Lower leg skin (tissue), 4 donors: ENCODE measurements at regions of chr12 and their contacts with region 1.

Region 1: DNA sequence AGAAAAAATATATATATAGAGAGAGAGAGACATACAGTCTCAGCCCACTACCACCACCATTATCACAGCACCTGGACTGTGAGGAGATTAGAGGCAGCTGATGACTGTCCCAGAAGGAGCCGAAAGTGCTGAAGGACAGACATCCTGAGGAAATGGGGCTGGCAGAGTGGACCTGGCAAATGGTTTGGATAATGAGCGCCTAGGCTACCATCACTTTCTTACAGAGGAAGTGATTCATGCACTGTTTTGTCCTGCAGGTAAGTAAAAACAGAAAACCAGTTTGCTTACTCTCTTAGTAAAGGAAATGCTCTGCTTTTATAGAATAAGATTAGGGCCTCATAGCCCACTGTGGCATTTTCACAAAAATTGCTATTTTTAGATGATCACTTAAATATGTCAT is 28.6 kb upstream of the DNM1L start:
- DNase-seq: no peak
- H3K4me3 ChIP-seq: no peak overlapping the region
- CTCF ChIP-seq: no peak
- POLR2A ChIP-seq: no peak

Region 2: GRCh38 chr12:33795536-33795935 is 1145.0 kb after region 1 on chr12:
- intact Hi-C with region 1: loop called (anchors 5 kb)
- DNase-seq: no peak
- H3K4me3 ChIP-seq: no peak overlapping the region
- CTCF ChIP-seq: no peak
- POLR2A ChIP-seq: no peak